Activated naive CD4-positive, alpha-beta T cell treated with anti-CD3 and anti-CD28 coated beads for 36 hours (primary cell): ENCODE measurements at regions of chr6 and their contacts with region 1.

Region 1: DNA sequence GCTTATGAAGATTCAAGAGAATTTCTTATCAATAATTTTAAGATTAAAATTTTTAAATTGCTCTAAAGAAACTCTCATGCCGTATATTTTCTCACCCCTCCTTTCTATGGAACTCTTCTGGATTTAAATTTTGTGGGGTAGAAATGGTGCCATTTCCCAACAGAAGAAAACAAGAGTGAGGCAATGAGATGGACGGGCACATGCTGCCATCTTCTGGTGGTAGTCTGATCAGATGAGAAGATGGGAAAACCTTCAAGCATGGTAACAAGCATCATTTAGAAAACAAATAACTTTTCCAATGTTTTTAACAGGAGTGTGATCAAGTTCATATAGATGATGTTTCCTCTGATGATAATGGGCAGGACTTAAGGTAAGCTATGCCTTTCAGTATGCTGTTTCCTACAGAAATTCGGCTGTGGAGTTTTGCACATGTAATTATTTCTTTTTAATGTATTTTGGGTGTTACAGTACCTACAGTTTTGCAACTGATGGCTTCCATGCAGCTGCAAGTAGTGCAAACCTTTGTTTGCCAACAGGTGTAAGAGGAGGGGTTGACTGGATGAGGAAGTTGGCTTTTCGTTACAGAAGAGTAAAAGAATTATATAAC is 271.4 kb downstream of the EYA4 start:
- DNase-seq: peak; percentile 58
- H3K4me3 Mint-ChIP-seq: no peak overlapping the region
- H3K27ac Mint-ChIP-seq: no peak overlapping the region
- H3K4me1 Mint-ChIP-seq: no peaks in the 10 kb centered on the region
- H3K27me3 Mint-ChIP-seq: peaks cover 15% of the 10 kb centered on the region

Region 2: DNA sequence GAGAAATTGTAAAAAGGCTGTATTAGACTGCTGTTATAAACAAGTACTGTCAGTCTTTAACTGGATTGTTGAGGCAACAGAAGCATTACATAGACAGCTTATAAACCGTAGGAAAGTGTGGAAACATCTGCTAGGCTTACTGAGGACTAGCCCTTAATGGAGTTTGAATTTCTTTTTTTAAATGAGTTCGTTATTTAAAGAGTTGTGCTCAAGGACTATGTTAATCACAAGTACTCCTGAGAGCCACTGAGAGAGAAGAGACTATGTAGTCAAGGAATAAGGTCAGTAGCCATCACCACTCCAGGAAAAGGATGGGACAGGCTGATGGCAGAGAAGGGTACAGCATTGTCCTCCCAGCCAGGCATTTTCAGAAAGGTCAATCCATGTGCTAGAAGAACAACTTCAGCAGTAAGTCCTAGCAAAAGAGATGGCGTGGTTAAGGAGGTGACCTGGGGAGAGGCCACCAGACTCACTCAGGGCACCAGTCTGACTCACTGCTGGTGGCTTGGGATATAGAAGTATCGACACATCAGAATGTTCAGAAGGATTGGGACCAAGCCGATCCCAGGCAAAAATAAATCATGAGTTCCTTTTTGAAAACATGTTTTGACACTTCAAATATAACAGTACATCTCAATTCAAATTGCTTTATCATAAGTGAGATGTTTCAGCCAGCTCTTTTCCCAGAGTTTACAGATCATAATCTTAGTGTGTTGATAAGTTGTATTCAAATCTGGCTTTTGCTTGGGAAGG is 691.7 kb before region 1 on chr6:
- CTCF ChIA-PET with region 1: no interaction called
- intact Hi-C with region 1: loop called (anchors 1 kb)
- DNase-seq: no peak
- H3K4me3 Mint-ChIP-seq: no peak overlapping the region
- H3K27ac Mint-ChIP-seq: peak overlapping the region; percentile 72
- H3K4me1 Mint-ChIP-seq: peaks cover 42% of the 10 kb centered on the region
- H3K27me3 Mint-ChIP-seq: no peaks in the 10 kb centered on the region

Region 3: GRCh38 chr6:132830334-132830751 is 682.2 kb before region 1 on chr6:
- CTCF ChIA-PET with region 1: no interaction called
- intact Hi-C with region 1: loop called (anchors 1 kb)
- DNase-seq: no peak
- H3K4me3 Mint-ChIP-seq: no peak overlapping the region
- H3K27ac Mint-ChIP-seq: no peak overlapping the region
- H3K4me1 Mint-ChIP-seq: no peaks in the 10 kb centered on the region
- H3K27me3 Mint-ChIP-seq: no peaks in the 10 kb centered on the region

Region 4: GRCh38 chr6:133286765-133287164 is 225.7 kb before region 1 on chr6:
- CTCF ChIA-PET with region 1: no interaction called
- intact Hi-C with region 1: loop called (anchors 1 kb)
- DNase-seq: no peak
- H3K4me3 Mint-ChIP-seq: no peak overlapping the region
- H3K27ac Mint-ChIP-seq: no peak overlapping the region
- H3K4me1 Mint-ChIP-seq: no peaks in the 10 kb centered on the region
- H3K27me3 Mint-ChIP-seq: peaks cover 2% of the 10 kb centered on the region

Region 5: GRCh38 chr6:133523816-133524215 is 11.3 kb after region 1 on chr6:
- CTCF ChIA-PET with region 1: no interaction called
- intact Hi-C with region 1: no loop called
- DNase-seq: no peak
- H3K4me3 Mint-ChIP-seq: no peak overlapping the region
- H3K27ac Mint-ChIP-seq: no peak overlapping the region
- H3K4me1 Mint-ChIP-seq: no peaks in the 10 kb centered on the region
- H3K27me3 Mint-ChIP-seq: peaks cover 4% of the 10 kb centered on the region